Colonic mucosa (tissue), 4 donors: ENCODE measurements at regions of chr20 and their contacts with region 1.

Region 1: DNA sequence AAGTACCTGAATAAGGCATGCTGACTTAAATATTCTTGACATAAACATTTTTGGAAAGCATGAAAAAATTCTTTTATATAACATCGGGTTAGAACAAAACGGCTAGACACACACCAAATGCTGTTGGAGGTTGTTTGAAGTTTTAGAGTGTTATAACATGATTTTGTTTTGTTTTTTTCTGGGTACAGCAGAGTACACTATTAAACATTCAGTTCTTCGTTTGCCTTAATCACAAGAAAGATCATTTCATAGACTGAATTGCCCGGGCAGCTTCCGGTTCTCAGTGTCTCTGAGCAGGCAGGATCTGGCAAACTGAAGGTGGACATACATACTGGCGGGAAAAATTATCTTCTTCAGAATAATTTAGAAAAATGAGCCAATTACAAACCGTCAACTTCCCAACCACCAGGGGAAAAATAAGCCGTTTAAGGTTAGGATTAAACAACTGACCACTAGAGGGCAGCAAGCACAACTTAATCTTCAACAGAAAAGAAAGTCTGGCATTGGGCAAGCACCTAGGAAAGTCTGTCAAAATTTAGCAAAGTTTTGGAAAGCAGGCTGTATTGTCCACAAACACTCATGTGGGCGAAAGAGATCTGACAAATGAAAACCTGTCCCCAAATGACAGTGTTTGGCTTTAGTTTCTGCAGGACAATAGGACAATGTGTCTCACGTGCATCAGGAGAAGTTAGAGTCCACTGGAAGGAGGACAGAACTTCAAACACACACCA is 15.0 kb downstream of the ZNF217 start:
- DNase-seq: peak; percentile 84
- H3K4me3 ChIP-seq: peak overlapping the region; percentile 1
- H3K27ac ChIP-seq: peak overlapping the region; percentile 68
- H3K4me1 ChIP-seq: peaks cover 19% of the 10 kb centered on the region
- H3K27me3 ChIP-seq: no peaks in the 10 kb centered on the region
- CTCF ChIP-seq: peak; percentile 85

Region 2: GRCh38 chr20:53750827-53751619 is 172.4 kb after region 1 on chr20:
- intact Hi-C with region 1: loop called (anchors 10 kb)
- DNase-seq: no peak
- H3K4me3 ChIP-seq: no peak overlapping the region
- H3K27ac ChIP-seq: peak overlapping the region; percentile 75
- H3K4me1 ChIP-seq: peaks cover 16% of the 10 kb centered on the region
- H3K27me3 ChIP-seq: no peaks in the 10 kb centered on the region
- CTCF ChIP-seq: no peak

Region 3: GRCh38 chr20:53915446-53916172 is 337.0 kb after region 1 on chr20:
- intact Hi-C with region 1: loop called (anchors 2 kb)
- DNase-seq: peak; percentile 100
- H3K4me3 ChIP-seq: peak overlapping the region; percentile 53
- H3K27ac ChIP-seq: peak overlapping the region; percentile 94
- H3K4me1 ChIP-seq: peaks cover 24% of the 10 kb centered on the region
- H3K27me3 ChIP-seq: no peaks in the 10 kb centered on the region
- CTCF ChIP-seq: peak; percentile 89

Region 4: GRCh38 chr20:53939572-53940359 is 361.1 kb after region 1 on chr20:
- intact Hi-C with region 1: loop called (anchors 5 kb)
- DNase-seq: peak; percentile 97
- H3K4me3 ChIP-seq: no peak overlapping the region
- H3K27ac ChIP-seq: peak overlapping the region; percentile 73
- H3K4me1 ChIP-seq: peaks cover 16% of the 10 kb centered on the region
- H3K27me3 ChIP-seq: no peaks in the 10 kb centered on the region
- CTCF ChIP-seq: peak; percentile 66

Region 5: DNA sequence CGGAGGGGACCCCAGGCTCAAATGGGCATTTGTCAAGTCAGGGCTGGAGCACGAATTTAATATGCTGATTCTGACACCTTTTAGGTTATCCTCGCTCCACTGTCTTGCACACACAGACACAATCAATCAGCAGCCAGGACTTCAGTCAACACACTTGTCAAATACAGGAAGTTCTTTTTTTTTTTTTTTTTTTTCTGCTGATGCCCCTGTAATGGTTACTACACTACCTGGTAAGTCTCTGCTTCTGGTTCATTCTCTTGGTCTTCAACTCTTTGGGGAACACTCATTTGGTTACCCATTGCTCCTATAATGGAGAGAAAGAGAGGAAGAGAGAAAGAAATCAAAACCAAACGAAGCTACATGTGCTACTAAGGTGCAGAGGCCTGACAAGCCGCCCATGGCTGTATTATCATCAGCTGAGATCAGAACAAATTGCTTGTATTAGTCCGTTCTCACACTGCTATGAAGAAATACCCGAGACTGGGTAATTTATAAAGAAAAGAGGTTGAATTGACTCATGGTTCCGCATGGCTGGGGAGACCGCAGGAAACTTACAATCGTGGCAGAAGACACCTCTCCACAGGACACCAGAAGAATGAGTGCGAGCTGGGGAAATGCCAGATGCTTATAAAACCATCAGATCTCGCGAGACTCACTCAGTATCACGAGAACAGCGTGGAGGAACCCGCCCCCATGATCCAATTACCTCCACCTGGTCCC is 479.9 kb after region 1 on chr20:
- intact Hi-C with region 1: loop called (anchors 10 kb)
- DNase-seq: no peak
- H3K4me3 ChIP-seq: no peak overlapping the region
- H3K27ac ChIP-seq: no peak overlapping the region
- H3K4me1 ChIP-seq: no peaks in the 10 kb centered on the region
- H3K27me3 ChIP-seq: no peaks in the 10 kb centered on the region
- CTCF ChIP-seq: no peak